ENCODE measurements at regions of chr4 and their contacts with region 1.

Region 1: GRCh38 chr4:138953961-138954371 is 61.6 kb upstream of the NOCT start:
- DNase-seq: no peak

Region 2: DNA sequence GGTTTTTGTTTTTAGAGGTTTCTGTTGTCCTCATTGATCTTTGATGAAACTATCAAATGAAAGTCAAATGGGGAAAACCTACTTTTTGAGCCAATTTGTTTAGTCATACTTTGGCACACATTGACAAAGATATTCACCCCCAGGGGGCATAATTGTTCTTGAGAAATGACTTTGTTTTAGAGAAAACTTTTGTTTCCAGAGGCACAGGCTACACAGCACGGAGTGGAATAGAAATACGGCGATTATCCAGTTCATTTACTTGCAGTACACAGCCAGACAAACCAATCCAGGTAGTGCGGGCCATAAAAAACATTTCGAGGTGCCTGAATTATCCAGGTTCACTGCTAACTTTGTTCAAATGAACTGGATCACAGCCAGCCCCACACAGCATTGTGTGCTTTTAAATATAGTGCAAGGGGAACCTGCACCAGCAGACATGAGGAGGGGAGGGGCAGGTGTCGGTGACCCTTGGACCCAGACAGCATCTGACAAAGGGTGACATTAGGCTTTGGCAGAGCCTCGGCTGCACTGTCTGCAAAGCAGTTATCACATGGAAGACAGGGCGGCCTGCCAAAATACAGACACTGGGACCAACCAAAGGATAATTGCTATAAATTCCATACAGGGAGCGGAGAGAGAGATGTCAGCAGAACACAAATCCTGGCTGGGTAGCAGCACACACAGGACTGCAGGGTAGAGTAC is 118.0 kb before region 1 on chr4:
- intact Hi-C with region 1: no loop called
- DNase-seq: peak; percentile 81

Region 3: DNA sequence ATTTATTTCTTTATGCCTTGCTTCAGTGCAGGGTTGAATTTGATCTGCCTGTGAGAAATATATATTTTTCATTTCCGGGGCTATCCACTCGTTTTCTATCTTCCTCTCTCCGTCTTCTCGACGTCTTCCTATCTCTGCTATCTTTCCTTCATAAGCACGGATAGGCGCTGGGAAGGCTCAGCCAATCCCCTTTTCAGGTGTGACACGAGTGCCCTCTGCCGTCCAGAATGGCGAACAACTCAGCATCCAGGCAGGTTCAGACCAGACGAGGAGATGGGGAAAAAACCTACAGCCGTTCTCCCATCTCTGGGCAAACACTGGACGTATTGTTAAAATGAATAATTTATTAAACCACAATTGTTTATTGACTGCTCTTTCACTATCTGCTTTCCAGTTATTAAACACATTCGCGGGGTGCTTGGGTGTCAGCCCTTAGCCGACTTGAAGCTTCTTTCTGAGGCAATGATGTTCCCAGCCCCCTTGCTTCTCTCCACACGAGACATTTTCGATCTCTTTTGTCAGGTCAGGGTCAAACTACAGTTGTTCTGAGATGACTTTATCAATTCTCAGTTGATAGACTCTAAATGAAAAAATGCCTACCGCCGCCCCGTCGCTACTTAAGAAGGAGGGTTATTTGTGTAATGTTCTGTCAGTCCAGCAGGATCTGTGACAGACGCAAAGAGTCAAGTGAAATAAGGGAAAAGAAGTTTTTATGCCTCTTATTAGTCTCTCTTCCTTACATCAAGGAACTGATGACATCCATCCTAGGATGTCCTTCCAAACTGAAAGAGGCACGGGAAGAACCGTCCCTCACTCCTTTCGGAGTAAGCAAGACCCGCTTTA is 34.7 kb before region 1 on chr4:
- intact Hi-C with region 1: no loop called
- DNase-seq: peak; percentile 84

Region 4: GRCh38 chr4:139015269-139015947 is 61.4 kb after region 1 on chr4 and contains the start of gene NOCT:
- intact Hi-C with region 1: loop called (anchors 2 kb)
- DNase-seq: peak; percentile 97
- total RNA-seq, gene NOCT: 7.3 TPM

Region 5: GRCh38 chr4:139315221-139315675 is 361.3 kb after region 1 on chr4:
- intact Hi-C with region 1: no loop called
- DNase-seq: no peak

Measured in cardiac septum (tissue), 1 donor.